CD4-positive, alpha-beta memory T cell (primary cell): ENCODE measurements at regions of chr7 and their contacts with region 1.

Region 1: GRCh38 chr7:142308326-142308725 is 50.5 kb upstream of the PRSS58 start:
- DNase-seq: no peak
- H3K4me3 ChIP-seq: no peak overlapping the region
- H3K4me3 Mint-ChIP-seq: peak overlapping the region; percentile 8 to 66 (median 50)
- H3K27ac ChIP-seq: no peak overlapping the region
- H3K27ac Mint-ChIP-seq: no peak overlapping the region
- H3K4me1 ChIP-seq: peaks cover 19% of the 10 kb centered on the region
- H3K4me1 Mint-ChIP-seq: peaks cover 8 to 21% (median 13%) of the 10 kb centered on the region in 4 donors
- H3K27me3 ChIP-seq: no peaks in the 10 kb centered on the region
- H3K27me3 Mint-ChIP-seq: peaks cover 6 to 8% of the 10 kb centered on the region in 2 donors

Region 2: GRCh38 chr7:142001163-142001874 is 307.0 kb before region 1 on chr7:
- CTCF ChIA-PET with region 1: no interaction called
- POLR2A ChIA-PET with region 1: no interaction called
- intact Hi-C with region 1: no loop called
- DNase-seq: no peak
- H3K4me3 ChIP-seq: no peak overlapping the region
- H3K4me3 Mint-ChIP-seq: no peak overlapping the region
- H3K27ac ChIP-seq: no peak overlapping the region
- H3K27ac Mint-ChIP-seq: peak overlapping the region in 1 of 7 donors; percentile 24
- H3K4me1 ChIP-seq: no peaks in the 10 kb centered on the region
- H3K4me1 Mint-ChIP-seq: no peaks in the 10 kb centered on the region
- H3K27me3 ChIP-seq: no peaks in the 10 kb centered on the region
- H3K27me3 Mint-ChIP-seq: peaks cover 6 to 12% of the 10 kb centered on the region in 2 donors

Region 3: GRCh38 chr7:142345811-142346210 is 37.5 kb after region 1 on chr7:
- CTCF ChIA-PET with region 1: interaction called, 11 read pairs
- POLR2A ChIA-PET with region 1: interaction called, 6 read pairs
- intact Hi-C with region 1: loop called (anchors 1 kb)
- DNase-seq: peak in 3 of 5 donors; percentile 48 to 62 (median 55)
- H3K4me3 ChIP-seq: no peak overlapping the region
- H3K4me3 Mint-ChIP-seq: peak overlapping the region in 6 of 8 donors; percentile 2 to 75 (median 44)
- H3K27ac ChIP-seq: peak overlapping the region; percentile 10
- H3K27ac Mint-ChIP-seq: peak overlapping the region in 5 of 7 donors; percentile 6 to 84 (median 39)
- H3K4me1 ChIP-seq: peaks cover 25% of the 10 kb centered on the region
- H3K4me1 Mint-ChIP-seq: peaks cover 0 to 37% (median 9%) of the 10 kb centered on the region in 4 donors
- H3K27me3 ChIP-seq: no peaks in the 10 kb centered on the region
- H3K27me3 Mint-ChIP-seq: peaks cover 0 to 3% of the 10 kb centered on the region in 2 donors

Region 4: DNA sequence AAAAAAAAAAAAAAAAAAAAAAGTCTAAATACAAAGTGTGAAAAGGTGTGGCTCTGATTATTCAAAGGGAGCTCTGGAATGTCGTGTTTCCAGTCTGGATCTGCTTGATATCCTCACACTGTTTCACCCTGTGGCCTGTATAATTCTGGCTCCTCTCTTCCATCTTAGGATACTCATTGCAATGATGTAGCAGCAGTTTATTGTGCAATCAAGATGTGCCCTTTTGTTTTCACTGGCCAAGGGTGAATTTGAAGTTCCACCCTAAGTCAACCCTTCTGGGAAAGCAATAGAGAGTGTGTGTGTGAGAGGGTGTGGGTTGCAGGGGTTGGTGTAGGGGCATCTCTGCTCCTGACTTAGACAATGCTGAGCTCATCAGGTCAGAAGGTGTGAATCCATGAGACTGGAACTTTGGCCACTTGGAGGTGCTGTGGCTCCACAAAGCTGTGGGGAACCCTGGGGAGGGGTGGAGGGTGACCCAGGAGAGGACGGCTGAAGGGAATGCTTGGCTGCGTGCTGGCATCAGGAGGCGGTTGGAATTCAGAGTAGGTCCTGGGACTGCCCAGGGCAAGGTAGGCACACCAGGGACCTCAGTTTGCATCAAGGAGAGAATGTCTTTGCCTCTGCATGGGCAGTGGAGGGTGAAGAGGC is 67.5 kb after region 1 on chr7:
- CTCF ChIA-PET with region 1: no interaction called
- POLR2A ChIA-PET with region 1: no interaction called
- intact Hi-C with region 1: no loop called
- DNase-seq: peak in 1 of 5 donors; percentile 11
- H3K4me3 ChIP-seq: no peak overlapping the region
- H3K4me3 Mint-ChIP-seq: peak overlapping the region in 3 of 8 donors; percentile 44 to 64 (median 47)
- H3K27ac ChIP-seq: no peak overlapping the region
- H3K27ac Mint-ChIP-seq: peak overlapping the region in 3 of 7 donors; percentile 40 to 58 (median 44)
- H3K4me1 ChIP-seq: no peaks in the 10 kb centered on the region
- H3K4me1 Mint-ChIP-seq: peaks cover 0 to 3% (median 0%) of the 10 kb centered on the region in 4 donors
- H3K27me3 ChIP-seq: no peaks in the 10 kb centered on the region
- H3K27me3 Mint-ChIP-seq: peaks cover 6 to 8% of the 10 kb centered on the region in 2 donors